ENCODE measurements at regions of chr5 and their contacts with region 1.

Region 1: GRCh38 chr5:136212252-136212721 is 19.3 kb upstream of the SMIM32 start:
- DNase-seq: no peak
- H3K4me3 ChIP-seq: no peak overlapping the region
- CTCF ChIP-seq: peak; percentile 89

Region 2: DNA sequence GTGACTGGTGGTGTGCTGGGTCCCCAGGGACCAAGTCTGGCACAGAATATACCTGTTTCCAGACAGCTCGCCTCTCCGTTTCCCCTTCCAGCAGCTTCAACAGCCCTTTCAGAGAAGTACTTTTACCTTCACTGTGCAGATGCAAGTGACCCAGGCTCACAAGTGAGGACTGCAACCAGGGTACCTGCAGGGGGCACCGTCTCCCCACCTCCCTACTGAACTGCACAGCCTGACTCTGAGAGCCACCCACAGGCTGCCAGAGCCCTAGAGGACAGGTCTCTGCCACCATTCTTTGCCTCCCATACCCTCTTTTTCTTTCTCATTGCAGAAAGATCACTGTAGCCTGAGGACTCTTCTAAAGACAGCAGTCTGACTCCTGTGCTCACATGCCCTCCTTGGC is 332.0 kb before region 1 on chr5:
- CTCF ChIA-PET with region 1: interaction called, 67 read pairs
- POLR2A ChIA-PET with region 1: no interaction called
- DNase-seq: no peak
- H3K4me3 ChIP-seq: no peak overlapping the region
- CTCF ChIP-seq: peak; percentile 27

Region 3: DNA sequence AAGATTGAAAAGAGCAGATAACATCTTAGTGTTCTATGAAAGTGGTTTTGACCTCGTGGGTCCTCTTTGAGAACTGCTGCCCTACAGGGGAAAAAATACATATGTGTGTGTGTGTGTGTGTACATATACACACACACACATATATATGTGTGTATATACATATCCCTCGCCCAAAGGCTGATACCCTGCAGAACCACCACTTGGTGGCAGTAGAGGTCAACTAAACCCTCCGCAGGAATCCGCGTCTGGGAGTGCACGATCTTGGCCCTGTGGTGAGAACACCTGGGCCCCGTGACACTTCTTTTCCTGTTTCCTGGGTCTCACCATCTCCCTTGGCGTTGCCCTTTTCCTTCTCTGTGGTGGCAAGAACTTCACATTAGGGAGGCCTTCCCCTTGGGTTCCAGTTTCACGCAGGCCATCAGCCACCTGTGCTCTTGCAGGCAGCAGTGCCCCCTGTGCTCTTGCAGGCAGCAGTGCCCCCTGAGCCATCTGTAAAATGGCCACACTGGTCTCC is 324.9 kb before region 1 on chr5:
- CTCF ChIA-PET with region 1: interaction called, 90 read pairs
- POLR2A ChIA-PET with region 1: no interaction called
- DNase-seq: peak; percentile 5
- H3K4me3 ChIP-seq: no peak overlapping the region
- CTCF ChIP-seq: peak; percentile 77

Region 4: GRCh38 chr5:136193322-136193935 is 18.9 kb before region 1 on chr5:
- CTCF ChIA-PET with region 1: interaction called, 16 read pairs
- POLR2A ChIA-PET with region 1: no interaction called
- DNase-seq: no peak
- H3K4me3 ChIP-seq: peak overlapping the region; percentile 45
- CTCF ChIP-seq: no peak

Region 5: DNA sequence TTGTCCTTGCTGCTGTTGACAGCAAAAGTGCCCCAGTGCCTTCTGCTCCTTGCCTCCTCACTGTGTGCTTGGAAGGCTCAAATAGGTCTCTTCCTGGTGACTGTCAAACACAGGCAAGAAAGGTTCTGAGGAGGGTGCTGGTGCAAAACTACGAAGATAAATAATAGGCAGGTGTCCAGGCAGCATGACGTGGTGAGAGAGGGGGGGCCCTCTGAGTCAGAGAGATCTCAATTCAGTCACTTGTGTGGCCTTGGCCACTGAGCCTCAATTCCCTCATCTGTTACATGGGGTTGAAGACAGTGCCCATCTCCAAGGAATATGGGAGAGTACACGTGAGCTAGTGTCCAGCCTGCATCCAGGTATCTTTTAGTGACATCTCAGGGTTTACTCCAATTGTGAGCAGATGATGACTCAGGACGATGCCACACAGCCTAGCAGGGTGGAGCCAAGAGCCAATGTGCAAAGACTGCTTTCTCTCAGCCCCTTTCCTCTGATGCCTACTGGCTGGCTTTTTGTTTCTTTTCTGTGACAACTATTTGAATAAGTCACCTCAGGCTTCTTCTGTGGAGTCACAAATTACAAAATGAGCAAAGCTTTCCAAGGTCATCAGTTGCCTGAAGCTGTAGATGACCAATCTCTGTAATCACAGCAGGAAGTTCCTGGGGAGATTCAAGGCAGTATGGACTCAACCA is 10.4 kb after region 1 on chr5:
- CTCF ChIA-PET with region 1: interaction called, 25 read pairs
- POLR2A ChIA-PET with region 1: no interaction called
- DNase-seq: no peak
- H3K4me3 ChIP-seq: no peak overlapping the region
- CTCF ChIP-seq: no peak

Measured in AG04449 (cell line).